WTC11 (cell line): ENCODE measurements at regions of chr17 and their contacts with region 1.

Region 1: DNA sequence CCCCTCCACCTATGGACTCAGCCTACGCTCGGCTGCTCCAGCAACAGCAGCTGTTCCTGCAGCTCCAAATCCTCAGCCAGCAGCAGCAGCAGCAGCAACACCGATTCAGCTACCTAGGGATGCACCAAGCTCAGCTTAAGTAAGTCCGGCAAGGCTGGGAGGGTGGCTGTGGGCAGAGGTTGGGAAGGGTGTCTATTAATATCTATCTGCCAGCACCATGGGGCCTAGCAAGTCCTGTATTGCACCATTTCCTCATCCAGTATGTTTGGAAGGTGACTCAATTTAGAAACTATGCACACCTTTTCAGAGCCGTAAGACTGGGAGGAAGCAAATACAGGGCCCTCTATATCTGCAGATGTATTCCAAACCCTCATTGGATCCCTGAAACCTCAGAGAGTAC is 45.0 kb upstream of the ARHGAP44 start:
- DNase-seq: no peak
- ATAC-seq: no peak
- H3K4me3 Mint-ChIP-seq: no peak overlapping the region
- H3K27ac Mint-ChIP-seq: no peak overlapping the region
- H3K4me1 Mint-ChIP-seq: peaks cover 22% of the 10 kb centered on the region
- H3K27me3 Mint-ChIP-seq: no peaks in the 10 kb centered on the region
- CTCF ChIP-seq: no peak

Region 2: DNA sequence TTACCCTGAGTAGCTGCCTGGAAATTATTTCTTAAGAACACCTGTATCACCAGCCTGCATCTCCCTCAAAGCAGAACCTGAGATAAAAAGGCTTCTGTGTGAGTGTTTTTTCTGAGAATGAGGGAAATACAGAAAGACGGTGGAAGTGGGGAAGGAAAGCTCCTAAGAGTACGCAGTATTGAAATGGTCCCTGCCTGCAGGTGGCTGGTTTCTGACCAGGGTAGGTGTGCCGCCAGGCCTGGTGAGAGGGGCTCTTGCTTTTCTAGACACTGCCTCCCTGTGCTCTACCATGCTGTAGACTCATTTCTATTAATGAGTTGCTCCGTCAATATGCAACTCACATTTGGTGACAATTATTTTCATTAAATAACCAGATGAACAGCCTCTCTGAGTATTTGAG is 521.9 kb before region 1 on chr17:
- CTCF ChIA-PET with region 1: interaction called, 12 read pairs
- POLR2A ChIA-PET with region 1: no interaction called
- DNase-seq: no peak
- ATAC-seq: peak; percentile 87
- H3K4me3 Mint-ChIP-seq: peak overlapping the region; percentile 38
- H3K27ac Mint-ChIP-seq: no peak overlapping the region
- H3K4me1 Mint-ChIP-seq: peaks cover 25% of the 10 kb centered on the region
- H3K27me3 Mint-ChIP-seq: peaks cover 6% of the 10 kb centered on the region; the same call in 1 of the 2 replicates
- CTCF ChIP-seq: no peak

Region 3: DNA sequence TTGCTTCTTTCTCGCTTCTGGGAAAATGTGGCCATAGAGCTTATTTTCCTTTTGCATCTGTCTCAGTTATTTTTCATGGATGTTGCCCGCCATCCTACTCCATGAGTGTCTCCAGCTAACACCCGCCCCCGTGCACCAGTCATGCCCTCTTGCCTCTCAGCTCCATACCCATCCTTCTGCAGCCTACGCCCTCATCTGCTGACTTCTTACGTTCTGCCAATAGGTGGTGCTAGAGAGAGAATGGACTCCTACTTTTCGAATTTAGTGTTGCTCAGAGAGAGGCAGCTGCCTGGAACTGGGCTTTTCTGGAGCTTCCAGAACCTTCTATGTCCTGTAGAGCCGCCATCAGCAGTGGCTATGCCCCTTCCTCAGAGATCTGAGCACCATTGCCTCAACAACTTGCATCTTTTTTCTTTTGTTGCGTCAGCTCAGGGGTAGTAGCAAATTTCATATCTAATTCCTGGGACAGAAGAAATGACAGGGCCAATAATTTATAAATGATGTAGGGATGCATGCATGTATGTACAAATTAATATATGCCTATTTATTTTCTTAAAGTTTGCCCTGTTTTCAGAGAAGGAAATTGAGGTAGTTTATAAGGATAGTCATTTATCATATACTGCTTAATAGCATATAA is 198.3 kb before region 1 on chr17:
- CTCF ChIA-PET with region 1: interaction called, 68 read pairs
- POLR2A ChIA-PET with region 1: no interaction called
- DNase-seq: peak; percentile 49
- ATAC-seq: peak; percentile 96
- H3K4me3 Mint-ChIP-seq: no peak overlapping the region
- H3K27ac Mint-ChIP-seq: no peak overlapping the region
- H3K4me1 Mint-ChIP-seq: no peaks in the 10 kb centered on the region; the same call in 1 of the 2 replicates
- H3K27me3 Mint-ChIP-seq: no peaks in the 10 kb centered on the region; the same call in 1 of the 2 replicates
- CTCF ChIP-seq: peak; percentile 69

Region 4: DNA sequence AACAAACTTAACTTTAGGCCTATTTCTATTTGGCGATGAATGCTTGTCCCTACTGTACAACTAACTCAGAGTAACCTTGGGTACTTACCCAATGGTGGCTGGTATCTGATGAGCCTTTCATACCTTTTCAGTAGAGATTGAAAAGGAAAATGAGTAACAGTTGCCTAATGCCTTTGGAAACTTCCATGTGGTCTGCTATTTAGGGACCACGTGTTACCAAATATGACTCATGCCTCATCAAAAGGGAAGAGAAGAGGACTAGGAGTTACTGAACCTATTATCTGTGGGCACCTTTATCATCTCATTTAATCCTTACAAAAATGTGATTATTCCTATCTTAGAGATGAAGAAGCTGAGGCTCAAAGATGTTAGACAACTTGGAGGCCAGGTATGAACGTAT is 70.5 kb before region 1 on chr17:
- CTCF ChIA-PET with region 1: interaction called, 58 read pairs
- POLR2A ChIA-PET with region 1: no interaction called
- DNase-seq: no peak
- ATAC-seq: no peak
- H3K4me3 Mint-ChIP-seq: no peak overlapping the region
- H3K27ac Mint-ChIP-seq: no peak overlapping the region
- H3K4me1 Mint-ChIP-seq: 0 out of 2 replicates have a peak, but pooled peaks cover 3% of the 10 kb centered on the region
- H3K27me3 Mint-ChIP-seq: no peaks in the 10 kb centered on the region
- CTCF ChIP-seq: no peak

Region 5: GRCh38 chr17:12706070-12706469 is 38.2 kb before region 1 on chr17:
- CTCF ChIA-PET with region 1: interaction called, 11 read pairs
- POLR2A ChIA-PET with region 1: no interaction called
- DNase-seq: no peak
- ATAC-seq: peak; percentile 26; the same call in 1 of the 2 replicates
- H3K4me3 Mint-ChIP-seq: no peak overlapping the region
- H3K27ac Mint-ChIP-seq: no peak overlapping the region
- H3K4me1 Mint-ChIP-seq: peaks cover 16% of the 10 kb centered on the region
- H3K27me3 Mint-ChIP-seq: no peaks in the 10 kb centered on the region
- CTCF ChIP-seq: no peak

Region 6: DNA sequence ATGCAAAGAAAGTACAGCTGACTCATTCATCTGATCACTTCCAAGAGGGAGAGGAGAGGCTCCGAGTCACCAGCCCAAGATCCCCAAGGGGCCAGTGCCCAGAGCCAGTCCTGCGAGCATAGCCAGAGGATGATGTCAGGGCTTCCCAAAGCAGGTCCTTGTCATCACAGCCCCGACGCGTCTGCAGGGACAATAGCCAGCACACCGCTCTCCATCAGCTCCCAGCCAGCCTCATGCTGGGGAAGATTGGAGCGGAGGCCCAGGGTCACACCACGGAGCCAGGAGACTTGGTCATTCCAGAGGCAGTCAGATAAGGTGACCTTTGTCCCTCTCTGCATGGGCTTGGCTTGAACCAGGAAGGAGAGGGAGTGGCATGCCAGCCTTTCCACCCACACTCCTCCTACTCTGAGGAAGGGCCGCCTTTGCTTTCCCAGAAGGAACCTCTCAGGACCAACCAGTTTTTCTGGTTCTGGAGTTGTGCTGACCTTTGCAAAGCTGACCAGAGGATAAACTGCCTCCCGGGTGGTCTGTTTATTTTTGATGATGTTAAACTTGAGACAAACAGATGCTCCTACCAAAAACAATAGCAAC is 13.3 kb before region 1 on chr17:
- CTCF ChIA-PET with region 1: interaction called, 28 read pairs
- POLR2A ChIA-PET with region 1: no interaction called
- DNase-seq: peak; percentile 24
- ATAC-seq: peak; percentile 95
- H3K4me3 Mint-ChIP-seq: no peak overlapping the region
- H3K27ac Mint-ChIP-seq: peak overlapping the region; percentile 42
- H3K4me1 Mint-ChIP-seq: peaks cover 24% of the 10 kb centered on the region
- H3K27me3 Mint-ChIP-seq: no peaks in the 10 kb centered on the region
- CTCF ChIP-seq: no peak

Region 7: DNA sequence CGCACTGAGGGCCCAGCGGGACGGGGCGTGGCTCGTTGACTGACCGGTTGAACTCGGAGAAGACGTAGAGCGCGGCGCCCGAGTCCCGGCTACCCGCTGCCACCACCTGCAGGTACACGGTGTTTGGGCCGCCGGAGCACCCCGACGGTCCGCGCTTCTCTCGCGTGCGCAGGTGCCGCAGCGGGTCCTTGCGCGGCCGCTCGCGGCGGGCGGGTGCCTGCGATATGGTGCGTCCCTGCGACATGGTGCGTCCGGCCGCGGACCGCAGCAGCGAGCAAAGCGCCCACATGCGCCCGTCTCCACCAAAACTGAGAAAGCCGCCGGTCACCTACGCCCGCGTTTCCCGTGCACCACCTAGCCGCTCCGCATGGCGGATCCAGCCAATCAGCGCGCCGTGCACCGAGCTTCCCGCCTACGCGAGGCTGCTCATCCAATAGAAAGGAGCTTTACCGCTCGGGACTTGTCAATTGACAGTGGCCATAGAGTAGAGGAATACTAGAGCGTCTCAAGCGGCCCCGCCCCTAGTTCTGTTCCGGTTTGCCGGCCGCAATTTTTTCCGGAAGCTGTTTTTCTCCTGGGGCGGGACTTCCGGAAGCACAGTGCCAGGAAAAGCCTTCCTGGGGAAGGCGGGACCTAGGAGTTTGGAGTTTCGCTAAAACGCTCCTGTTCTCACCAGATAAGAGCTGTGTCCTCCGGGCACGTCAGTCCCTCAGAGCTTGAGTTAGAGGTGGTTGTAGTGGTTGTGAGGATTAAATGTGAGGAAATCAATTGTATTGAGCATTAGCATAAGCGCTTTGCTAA is 273.6 kb after region 1 on chr17 and contains the start of gene ELAC2:
- CTCF ChIA-PET with region 1: interaction called, 10 read pairs
- POLR2A ChIA-PET with region 1: no interaction called
- DNase-seq: peak; percentile 97
- ATAC-seq: peak; percentile 98
- H3K4me3 Mint-ChIP-seq: peak within 1 kb of the TSS; percentile 95
- H3K27ac Mint-ChIP-seq: peak within 1 kb of the TSS; percentile 100
- H3K4me1 Mint-ChIP-seq: peaks cover 19% of the 10 kb centered on the region
- H3K27me3 Mint-ChIP-seq: no peaks in the 10 kb centered on the region; the same call in 1 of the 2 replicates
- CTCF ChIP-seq: no peak
- total RNA-seq, gene ELAC2: 76.3 to 86.9 TPM (median 77.7 TPM) in 3 replicates